Left cardiac atrium (tissue), 4 donors: ENCODE measurements at regions of chr11 and their contacts with region 1.

Region 1: GRCh38 chr11:14148653-14149273 is 186.2 kb downstream of the SPON1 start:
- DNase-seq: no peak
- ATAC-seq: peak; percentile 57 to 69

Region 2: DNA sequence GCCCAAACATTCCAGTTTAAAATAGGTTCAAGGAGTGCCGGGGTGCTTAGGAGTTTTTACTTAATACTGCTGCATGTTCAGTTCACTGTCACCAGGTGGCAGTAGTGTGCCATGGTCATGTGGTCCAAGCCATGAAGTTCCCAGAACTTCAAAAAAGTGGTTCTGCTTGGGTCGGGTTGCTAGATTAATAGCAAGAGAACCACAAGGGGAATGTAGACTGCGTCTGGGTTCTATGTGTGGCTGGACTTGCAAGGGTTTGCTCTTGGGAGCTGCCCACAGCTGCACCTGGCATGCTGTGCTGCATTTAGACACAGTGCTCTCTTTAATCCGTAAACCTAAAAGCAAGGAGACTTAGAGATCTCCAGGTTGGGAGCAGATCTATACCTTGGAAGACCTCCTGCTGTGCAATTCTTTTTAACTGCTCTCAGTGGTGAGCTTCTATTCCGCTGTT is 192.8 kb before region 1 on chr11:
- intact Hi-C with region 1: loop called (anchors 2 to 10 kb)
- DNase-seq: peak; percentile 47
- ATAC-seq: peak; percentile 53 to 73

Region 3: DNA sequence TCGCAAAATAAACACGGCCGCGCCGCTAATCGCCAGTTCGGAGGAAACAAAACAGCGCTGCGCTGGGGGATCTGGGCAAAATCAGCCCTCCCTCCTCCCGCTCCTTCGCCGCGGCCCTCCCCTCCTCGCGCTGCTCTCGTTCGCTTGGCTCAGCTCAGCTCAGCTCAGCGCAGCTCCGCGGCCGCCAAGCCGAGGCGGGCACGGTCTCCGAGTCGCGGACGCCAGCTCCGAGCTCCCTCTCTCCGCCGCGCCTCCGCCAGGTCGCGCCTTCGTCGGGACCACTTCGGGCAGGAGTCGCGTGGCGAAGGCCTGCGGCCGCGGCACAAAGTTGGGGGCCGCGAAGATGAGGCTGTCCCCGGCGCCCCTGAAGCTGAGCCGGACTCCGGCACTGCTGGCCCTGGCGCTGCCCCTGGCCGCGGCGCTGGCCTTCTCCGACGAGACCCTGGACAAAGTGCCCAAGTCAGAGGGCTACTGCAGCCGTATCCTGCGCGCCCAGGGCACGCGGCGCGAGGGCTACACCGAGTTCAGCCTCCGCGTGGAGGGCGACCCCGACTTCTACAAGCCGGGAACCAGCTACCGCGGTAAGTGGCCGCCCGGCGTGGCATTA is 186.1 kb before region 1 on chr11 and contains the start of gene SPON1:
- intact Hi-C with region 1: loop called (anchors 2 to 10 kb)
- DNase-seq: peak; percentile 51
- ATAC-seq: peak; percentile 83 to 86
- total RNA-seq, gene SPON1: 21.1 to 23.4 TPM